ENCODE measurements at regions of chr3 and their contacts with region 1.

Region 1: DNA sequence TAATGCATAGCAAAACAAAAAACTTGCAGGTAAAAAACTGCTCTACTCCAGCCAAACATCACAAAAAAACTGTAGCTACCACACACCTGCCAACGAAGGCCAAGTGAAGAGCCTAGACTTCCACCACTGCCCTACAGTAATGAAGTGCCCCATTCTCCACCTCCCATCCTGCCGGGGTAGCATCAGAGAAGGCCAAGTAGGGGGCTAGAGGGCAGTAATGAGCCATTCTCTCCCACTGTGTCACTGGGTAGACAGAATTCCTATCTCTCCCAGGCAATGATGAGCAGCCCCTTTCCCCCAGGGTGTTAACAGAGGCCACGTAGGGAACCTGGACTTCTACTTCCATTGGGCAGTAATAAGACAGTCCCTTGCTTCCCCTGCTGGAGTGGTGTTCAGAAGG is 9.5 kb downstream of the SEC22C start:
- DNase-seq: peak; percentile 31
- ATAC-seq: peak; percentile 73
- H3K4me3 ChIP-seq: no peak overlapping the region
- H3K4me3 Mint-ChIP-seq: no peak overlapping the region
- H3K27ac ChIP-seq: no peak overlapping the region
- H3K27ac Mint-ChIP-seq: no peak overlapping the region
- H3K4me1 ChIP-seq: no peaks in the 10 kb centered on the region
- H3K4me1 Mint-ChIP-seq: peaks cover 3% of the 10 kb centered on the region
- H3K27me3 ChIP-seq: no peaks in the 10 kb centered on the region
- H3K27me3 Mint-ChIP-seq: no peaks in the 10 kb centered on the region
- CTCF ChIP-seq: no peak

Region 2: DNA sequence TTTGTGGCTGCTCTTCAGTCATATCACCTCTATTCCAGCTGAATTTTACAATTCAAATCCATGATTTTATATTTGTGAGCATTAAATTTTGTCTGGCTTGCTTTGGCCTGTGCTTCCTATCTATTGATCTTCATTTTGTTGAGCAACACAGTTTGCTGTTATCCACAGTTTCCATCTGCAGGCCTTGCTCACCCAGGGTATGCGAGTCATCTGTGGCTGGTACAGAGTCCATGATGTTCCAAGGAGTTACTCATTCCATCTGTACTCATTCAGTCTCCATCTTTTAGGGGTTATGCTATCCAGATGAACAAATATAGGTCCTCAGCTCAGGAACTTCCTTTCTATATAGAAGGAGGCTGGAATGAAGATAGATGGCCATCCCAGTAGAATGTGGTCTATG is 236.2 kb before region 1 on chr3:
- CTCF ChIA-PET with region 1: no interaction called
- POLR2A ChIA-PET with region 1: no interaction called
- intact Hi-C with region 1: no loop called
- DNase-seq: no peak
- ATAC-seq: no peak
- H3K4me3 ChIP-seq: no peak overlapping the region
- H3K4me3 Mint-ChIP-seq: no peak overlapping the region
- H3K27ac ChIP-seq: no peak overlapping the region
- H3K27ac Mint-ChIP-seq: no peak overlapping the region
- H3K4me1 ChIP-seq: no peaks in the 10 kb centered on the region
- H3K4me1 Mint-ChIP-seq: no peaks in the 10 kb centered on the region
- H3K27me3 ChIP-seq: peaks cover 0 to 3% (median under 1%) of the 10 kb centered on the region in 4 experiments
- H3K27me3 Mint-ChIP-seq: peaks cover 19% of the 10 kb centered on the region
- CTCF ChIP-seq: no peak

Region 3: DNA sequence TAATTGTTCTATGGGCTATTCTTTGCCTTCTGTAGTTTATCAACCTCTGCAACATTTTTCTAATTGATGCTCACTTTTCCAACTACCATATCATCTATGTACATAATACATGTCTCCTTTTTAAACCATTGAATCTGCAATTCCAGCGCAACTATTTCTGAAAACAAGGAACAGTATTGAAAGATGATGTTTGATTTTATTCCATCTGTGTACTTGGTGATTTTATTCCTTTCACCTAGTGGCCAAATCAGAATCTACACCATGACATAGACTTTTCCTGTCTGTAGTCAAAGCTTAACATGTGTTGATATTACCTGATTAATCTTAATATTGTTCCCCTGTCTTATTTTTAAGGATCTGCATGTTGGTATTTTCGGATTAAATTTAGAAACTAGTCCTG is 41.2 kb after region 1 on chr3:
- CTCF ChIA-PET with region 1: no interaction called
- POLR2A ChIA-PET with region 1: no interaction called
- intact Hi-C with region 1: loop called (anchors 5 kb)
- DNase-seq: peak; percentile 35
- ATAC-seq: no peak
- H3K4me3 ChIP-seq: no peak overlapping the region
- H3K4me3 Mint-ChIP-seq: peak overlapping the region; percentile 0
- H3K27ac ChIP-seq: peak overlapping the region in 1 of 2 donors; percentile 38
- H3K27ac Mint-ChIP-seq: no peak overlapping the region
- H3K4me1 ChIP-seq: peaks cover 2 to 18% of the 10 kb centered on the region in 2 donors
- H3K4me1 Mint-ChIP-seq: peaks cover 35% of the 10 kb centered on the region
- H3K27me3 ChIP-seq: no peaks in the 10 kb centered on the region
- H3K27me3 Mint-ChIP-seq: no peaks in the 10 kb centered on the region
- CTCF ChIP-seq: peak; percentile 69

Region 4: DNA sequence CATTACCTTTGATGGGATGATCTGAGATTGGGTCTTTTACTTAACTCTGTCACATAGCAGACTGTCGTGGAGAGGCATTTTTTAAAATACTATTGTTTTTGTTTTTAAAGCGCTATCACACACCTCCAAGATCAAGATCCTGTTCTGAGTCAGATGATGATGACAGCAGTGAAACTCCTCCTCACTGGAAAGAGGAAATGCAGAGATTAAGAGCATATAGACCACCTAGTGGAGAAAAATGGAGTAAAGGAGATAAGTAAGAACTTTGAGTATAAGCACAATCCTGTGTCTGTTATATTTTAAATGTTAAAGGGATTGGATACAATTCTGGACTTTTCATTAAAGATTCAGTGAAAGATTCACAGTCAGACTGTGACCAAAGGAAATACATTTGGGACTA is 62.8 kb after region 1 on chr3:
- CTCF ChIA-PET with region 1: interaction called, 8 read pairs
- POLR2A ChIA-PET with region 1: no interaction called
- intact Hi-C with region 1: loop called (anchors 2 kb)
- DNase-seq: peak; percentile 61
- ATAC-seq: peak; percentile 78
- H3K4me3 ChIP-seq: no peak overlapping the region
- H3K4me3 Mint-ChIP-seq: no peak overlapping the region
- H3K27ac ChIP-seq: no peak overlapping the region
- H3K27ac Mint-ChIP-seq: no peak overlapping the region
- H3K4me1 ChIP-seq: no peaks in the 10 kb centered on the region
- H3K4me1 Mint-ChIP-seq: no peaks in the 10 kb centered on the region
- H3K27me3 ChIP-seq: no peaks in the 10 kb centered on the region
- H3K27me3 Mint-ChIP-seq: no peaks in the 10 kb centered on the region
- CTCF ChIP-seq: peak; percentile 54

Region 5: GRCh38 chr3:42732829-42733459 is 160.7 kb after region 1 on chr3:
- CTCF ChIA-PET with region 1: no interaction called
- POLR2A ChIA-PET with region 1: no interaction called
- intact Hi-C with region 1: no loop called
- DNase-seq: no peak
- ATAC-seq: no peak
- H3K4me3 ChIP-seq: no peak overlapping the region
- H3K4me3 Mint-ChIP-seq: no peak overlapping the region
- H3K27ac ChIP-seq: no peak overlapping the region
- H3K27ac Mint-ChIP-seq: no peak overlapping the region
- H3K4me1 ChIP-seq: no peaks in the 10 kb centered on the region
- H3K4me1 Mint-ChIP-seq: no peaks in the 10 kb centered on the region
- H3K27me3 ChIP-seq: no peaks in the 10 kb centered on the region
- H3K27me3 Mint-ChIP-seq: no peaks in the 10 kb centered on the region
- CTCF ChIP-seq: no peak

Region 6: DNA sequence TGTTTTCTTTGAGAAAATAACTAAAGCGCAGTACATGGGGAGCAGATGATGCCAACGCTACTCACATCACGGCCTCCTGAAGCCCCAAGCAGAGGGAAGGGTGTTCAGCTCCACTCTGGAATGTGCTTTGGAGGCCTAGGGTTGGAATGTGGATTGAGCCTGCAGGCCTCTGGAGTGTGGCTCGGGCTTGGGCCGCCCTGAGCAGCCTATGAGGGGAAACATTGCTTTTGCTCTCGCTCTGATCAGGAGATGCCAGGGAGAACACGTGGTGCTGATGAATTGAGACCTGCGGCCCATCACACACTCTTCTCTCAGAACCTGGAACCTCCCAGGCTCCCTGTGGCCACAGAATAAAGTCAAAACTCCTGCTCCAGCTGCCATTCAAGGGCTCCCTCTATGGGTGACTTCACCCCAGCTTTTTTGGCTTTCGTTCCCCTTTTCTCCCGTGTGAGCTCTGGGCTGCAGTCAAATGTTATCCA is 177.5 kb after region 1 on chr3:
- CTCF ChIA-PET with region 1: interaction called, 9 read pairs
- POLR2A ChIA-PET with region 1: no interaction called
- intact Hi-C with region 1: loop called (anchors 2 kb)
- DNase-seq: peak; percentile 20
- ATAC-seq: peak; percentile 10
- H3K4me3 ChIP-seq: no peak overlapping the region
- H3K4me3 Mint-ChIP-seq: no peak overlapping the region
- H3K27ac ChIP-seq: no peak overlapping the region
- H3K27ac Mint-ChIP-seq: no peak overlapping the region
- H3K4me1 ChIP-seq: peaks cover 0 to 3% of the 10 kb centered on the region in 2 donors
- H3K4me1 Mint-ChIP-seq: peaks cover 9% of the 10 kb centered on the region
- H3K27me3 ChIP-seq: no peaks in the 10 kb centered on the region
- H3K27me3 Mint-ChIP-seq: no peaks in the 10 kb centered on the region
- CTCF ChIP-seq: peak; percentile 14